ENCODE measurements at regions of chrX and their contacts with region 1.

Region 1: GRCh38 chrX:108224727-108225621 is 133.4 kb downstream of the ATG4A start:
- DNase-seq: peak; percentile 12
- H3K4me3 ChIP-seq: no peak overlapping the region
- H3K27ac ChIP-seq: no peak overlapping the region
- H3K4me1 ChIP-seq: no peaks in the 10 kb centered on the region
- CTCF ChIP-seq: peak; percentile 68

Region 2: DNA sequence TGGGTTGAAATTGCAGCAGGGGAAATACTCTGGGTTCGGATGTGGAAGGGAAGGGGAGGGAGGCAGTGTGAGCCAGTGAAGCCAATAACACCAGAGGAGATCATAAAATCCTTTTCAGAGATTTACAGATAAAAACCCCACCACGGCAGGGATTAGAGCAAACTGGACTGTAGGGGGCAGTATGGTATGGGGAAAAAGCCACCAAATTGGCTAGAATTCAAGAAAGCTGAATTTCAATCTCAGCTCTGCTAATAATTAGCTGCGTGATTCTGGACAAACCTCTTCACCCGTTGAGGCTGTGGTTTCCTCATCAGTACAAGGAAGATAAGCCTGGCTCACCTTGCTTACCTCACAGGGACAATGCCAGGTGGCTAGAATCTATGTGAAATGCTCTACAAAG is 25.3 kb before region 1 on chrX:
- CTCF ChIA-PET with region 1: no interaction called
- POLR2A ChIA-PET with region 1: no interaction called
- intact Hi-C with region 1: no loop called
- DNase-seq: peak; percentile 7
- H3K4me3 ChIP-seq: no peak overlapping the region
- H3K27ac ChIP-seq: no peak overlapping the region
- H3K4me1 ChIP-seq: no peaks in the 10 kb centered on the region
- CTCF ChIP-seq: peak; percentile 75

Region 3: DNA sequence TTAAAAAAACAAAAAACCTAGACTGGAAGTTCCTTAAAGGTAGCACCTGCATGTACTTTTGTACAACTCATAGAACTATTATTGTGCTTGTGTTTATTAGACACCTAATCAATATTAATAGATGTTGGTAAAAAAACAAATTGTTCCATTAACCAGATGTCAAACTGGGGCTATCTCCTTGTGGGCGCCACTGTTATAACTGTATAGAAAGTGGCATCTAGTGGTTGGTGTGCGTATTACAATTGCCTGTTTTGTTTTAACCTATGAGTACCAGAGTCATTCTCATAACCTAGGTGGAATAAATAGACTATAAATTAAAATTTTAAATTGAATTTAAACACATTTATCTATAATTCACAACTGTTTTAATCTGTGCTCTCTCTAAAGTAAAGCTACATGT is 312.0 kb after region 1 on chrX:
- CTCF ChIA-PET with region 1: interaction called, 3 read pairs
- POLR2A ChIA-PET with region 1: no interaction called
- intact Hi-C with region 1: loop called (anchors 10 kb)
- DNase-seq: peak; percentile 24
- H3K4me3 ChIP-seq: no peak overlapping the region
- H3K27ac ChIP-seq: no peak overlapping the region
- H3K4me1 ChIP-seq: no peaks in the 10 kb centered on the region
- CTCF ChIP-seq: peak; percentile 74